ENCODE measurements at regions of chr4 and their contacts with region 1.

Region 1: GRCh38 chr4:78205591-78205990 is 148.5 kb downstream of the FRAS1 start:
- DNase-seq: no peak
- ATAC-seq: peak; percentile 28
- H3K4me3 ChIP-seq: no peak overlapping the region
- H3K27ac ChIP-seq: no peak overlapping the region
- H3K4me1 ChIP-seq: no peaks in the 10 kb centered on the region
- H3K27me3 ChIP-seq: no peaks in the 10 kb centered on the region
- CTCF ChIP-seq: no peak
- EP300 ChIP-seq: no peak
- POLR2A ChIP-seq: no peak
- RAD21 ChIP-seq: no peak

Region 2: DNA sequence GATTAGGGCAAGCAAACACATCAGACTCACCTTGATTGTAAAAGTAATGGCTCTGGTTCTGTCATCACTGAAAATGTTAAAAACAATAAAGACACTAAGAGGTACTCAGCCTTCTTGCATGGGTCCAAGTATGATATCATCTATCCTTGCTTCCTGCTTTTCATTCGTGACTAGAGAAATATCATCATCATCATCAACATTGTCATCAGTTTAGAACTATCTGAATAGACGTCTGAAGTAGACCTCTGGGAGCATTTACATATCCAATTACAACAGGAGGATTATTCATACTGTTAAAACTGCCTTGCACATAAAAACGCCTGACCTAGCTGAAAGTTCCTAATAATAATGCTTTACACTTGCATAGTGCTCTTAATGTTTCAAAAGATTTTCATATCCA is 158.2 kb before region 1 on chr4:
- CTCF ChIA-PET with region 1: no interaction called
- POLR2A ChIA-PET with region 1: no interaction called
- RAD21 ChIA-PET with region 1: no interaction called
- SMC1A ChIA-PET with region 1: no interaction called
- in situ Hi-C with region 1: no loop called
- intact Hi-C with region 1: no loop called
- DNase-seq: no peak
- ATAC-seq: no peak
- H3K4me3 ChIP-seq: no peak overlapping the region
- H3K27ac ChIP-seq: no peak overlapping the region
- H3K4me1 ChIP-seq: no peaks in the 10 kb centered on the region
- H3K27me3 ChIP-seq: no peaks in the 10 kb centered on the region
- CTCF ChIP-seq: no peak
- EP300 ChIP-seq: no peak
- POLR2A ChIP-seq: no peak
- RAD21 ChIP-seq: no peak

Region 3: GRCh38 chr4:78166637-78167036 is 39.0 kb before region 1 on chr4:
- CTCF ChIA-PET with region 1: interaction called, 3 read pairs
- POLR2A ChIA-PET with region 1: interaction called, 3 read pairs
- RAD21 ChIA-PET with region 1: interaction called, 11 read pairs
- SMC1A ChIA-PET with region 1: interaction called, 13 read pairs
- in situ Hi-C with region 1: no loop called
- intact Hi-C with region 1: no loop called
- DNase-seq: no peak
- ATAC-seq: peak; percentile 79
- H3K4me3 ChIP-seq: no peak overlapping the region
- H3K27ac ChIP-seq: no peak overlapping the region
- H3K4me1 ChIP-seq: no peaks in the 10 kb centered on the region
- H3K27me3 ChIP-seq: no peaks in the 10 kb centered on the region
- CTCF ChIP-seq: no peak
- EP300 ChIP-seq: no peak
- POLR2A ChIP-seq: no peak
- RAD21 ChIP-seq: no peak

Region 4: DNA sequence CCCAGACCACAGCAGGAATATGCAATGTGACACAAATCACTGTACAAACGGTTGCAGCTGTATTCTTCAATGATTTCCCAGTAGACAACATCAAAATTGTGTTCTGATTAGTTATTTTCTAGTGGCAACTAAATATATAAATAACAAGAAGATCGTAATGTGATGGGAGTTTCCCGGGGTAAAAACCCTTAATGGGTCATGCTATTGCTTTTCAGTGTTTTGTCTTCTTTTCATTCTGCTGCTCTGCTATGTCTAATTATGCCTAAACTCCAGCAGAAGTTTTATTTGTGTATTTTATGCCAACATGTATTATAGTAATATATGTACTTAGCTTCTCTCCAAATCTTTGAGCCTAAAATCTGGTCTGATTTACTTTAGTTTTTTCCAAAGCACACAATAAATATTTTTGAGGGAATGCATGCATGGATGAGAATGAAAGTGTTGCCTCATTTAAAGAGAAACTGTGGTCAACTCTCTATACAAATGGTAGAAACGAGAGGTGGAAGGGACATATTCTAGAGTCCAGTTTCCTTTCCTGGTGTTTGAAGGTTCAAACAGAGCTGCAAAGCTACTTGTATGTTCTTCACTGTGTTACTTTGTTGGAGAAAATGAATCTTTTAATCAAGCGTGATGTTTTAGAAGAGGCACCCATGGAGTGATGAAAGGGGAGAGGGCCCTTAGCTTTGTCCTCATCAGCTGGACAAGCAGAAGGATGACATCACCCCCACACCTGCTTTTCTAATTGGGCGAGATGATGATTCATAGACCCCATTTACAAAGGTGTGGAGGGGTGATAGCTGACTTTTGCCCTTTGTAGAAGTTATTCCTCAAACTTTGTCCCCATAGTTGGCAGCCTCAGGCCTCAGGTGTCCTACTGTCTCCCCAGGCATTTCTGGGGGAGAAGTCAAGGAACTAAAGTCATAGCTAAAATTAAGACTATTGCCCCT is 18.7 kb before region 1 on chr4:
- CTCF ChIA-PET with region 1: interaction called, 4 read pairs
- POLR2A ChIA-PET with region 1: interaction called, 15 read pairs
- RAD21 ChIA-PET with region 1: interaction called, 24 read pairs
- SMC1A ChIA-PET with region 1: interaction called, 40 read pairs
- in situ Hi-C with region 1: no loop called
- intact Hi-C with region 1: no loop called
- DNase-seq: no peak
- ATAC-seq: peak; percentile 78
- H3K4me3 ChIP-seq: no peak overlapping the region
- H3K27ac ChIP-seq: no peak overlapping the region
- H3K4me1 ChIP-seq: no peaks in the 10 kb centered on the region
- H3K27me3 ChIP-seq: no peaks in the 10 kb centered on the region
- CTCF ChIP-seq: no peak
- EP300 ChIP-seq: no peak
- POLR2A ChIP-seq: no peak
- RAD21 ChIP-seq: no peak

Region 5: DNA sequence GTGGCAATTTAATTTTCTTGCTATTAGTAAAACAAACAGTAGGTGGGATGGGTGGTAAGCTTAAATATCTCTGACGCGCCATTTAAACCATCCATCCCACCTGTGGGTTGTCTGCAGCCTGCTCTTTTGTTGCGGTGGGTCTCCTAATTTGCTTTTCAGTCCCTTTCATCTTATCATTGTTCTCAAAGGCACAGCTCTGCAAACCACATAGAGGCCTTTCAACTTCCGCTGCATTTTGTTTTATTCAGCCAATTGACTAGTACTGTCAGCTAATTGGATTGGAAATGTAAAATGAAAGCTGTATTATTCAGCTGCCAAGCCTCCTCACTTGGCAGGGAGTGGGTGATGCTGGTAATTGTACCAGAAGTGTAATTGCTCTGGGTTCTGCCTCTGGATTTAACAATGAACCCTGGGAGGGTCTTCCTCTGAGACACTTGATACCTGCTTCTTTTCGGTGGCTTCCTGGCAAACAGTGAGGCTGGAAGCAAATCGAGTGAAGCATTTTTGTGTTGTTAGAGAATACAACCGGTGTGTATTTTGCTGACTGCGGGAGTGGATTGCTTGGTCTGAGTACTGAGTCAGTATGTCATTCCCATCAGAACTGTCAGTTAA is 17.1 kb after region 1 on chr4:
- CTCF ChIA-PET with region 1: interaction called, 5 read pairs
- POLR2A ChIA-PET with region 1: interaction called, 4 read pairs
- RAD21 ChIA-PET with region 1: no interaction called
- SMC1A ChIA-PET with region 1: interaction called, 15 read pairs
- in situ Hi-C with region 1: no loop called
- intact Hi-C with region 1: no loop called
- DNase-seq: no peak
- ATAC-seq: no peak
- H3K4me3 ChIP-seq: no peak overlapping the region
- H3K27ac ChIP-seq: no peak overlapping the region
- H3K4me1 ChIP-seq: no peaks in the 10 kb centered on the region
- H3K27me3 ChIP-seq: no peaks in the 10 kb centered on the region
- CTCF ChIP-seq: no peak
- EP300 ChIP-seq: no peak
- POLR2A ChIP-seq: no peak
- RAD21 ChIP-seq: no peak

Region 6: GRCh38 chr4:78293821-78294301 is 88.3 kb after region 1 on chr4:
- CTCF ChIA-PET with region 1: no interaction called
- POLR2A ChIA-PET with region 1: no interaction called
- RAD21 ChIA-PET with region 1: interaction called, 3 read pairs
- SMC1A ChIA-PET with region 1: interaction called, 14 read pairs
- in situ Hi-C with region 1: no loop called
- intact Hi-C with region 1: no loop called
- DNase-seq: no peak
- ATAC-seq: no peak
- H3K4me3 ChIP-seq: no peak overlapping the region
- H3K27ac ChIP-seq: no peak overlapping the region
- H3K4me1 ChIP-seq: peaks cover 8% of the 10 kb centered on the region; the same call in 1 of the 2 replicates
- H3K27me3 ChIP-seq: no peaks in the 10 kb centered on the region
- CTCF ChIP-seq: no peak
- EP300 ChIP-seq: no peak
- POLR2A ChIP-seq: no peak
- RAD21 ChIP-seq: no peak

Region 7: GRCh38 chr4:79198951-79199587 is 993.5 kb after region 1 on chr4:
- CTCF ChIA-PET with region 1: no interaction called
- POLR2A ChIA-PET with region 1: no interaction called
- RAD21 ChIA-PET with region 1: no interaction called
- SMC1A ChIA-PET with region 1: no interaction called
- in situ Hi-C with region 1: no loop called
- intact Hi-C with region 1: no loop called
- DNase-seq: no peak
- ATAC-seq: no peak
- H3K4me3 ChIP-seq: no peak overlapping the region
- H3K27ac ChIP-seq: no peak overlapping the region
- H3K4me1 ChIP-seq: no peaks in the 10 kb centered on the region
- H3K27me3 ChIP-seq: no peaks in the 10 kb centered on the region
- CTCF ChIP-seq: no peak
- EP300 ChIP-seq: no peak
- POLR2A ChIP-seq: no peak
- RAD21 ChIP-seq: no peak